Transverse colon (tissue), 4 donors: ENCODE measurements at regions of chr2 and their contacts with region 1.

Region 1: GRCh38 chr2:102050854-102051391 is 59.2 kb downstream of the IL1R2 start:
- DNase-seq: peak; percentile 71
- H3K4me3 ChIP-seq: no peak overlapping the region
- H3K27ac ChIP-seq: peak overlapping the region; percentile 81 to 87 (median 84)
- H3K4me1 ChIP-seq: peaks cover 16 to 55% (median 39%) of the 10 kb centered on the region in 4 donors
- H3K27me3 ChIP-seq: no peaks in the 10 kb centered on the region
- CTCF ChIP-seq: no peak
- EP300 ChIP-seq: peak; percentile 77
- POLR2A ChIP-seq: no peak

Region 2: DNA sequence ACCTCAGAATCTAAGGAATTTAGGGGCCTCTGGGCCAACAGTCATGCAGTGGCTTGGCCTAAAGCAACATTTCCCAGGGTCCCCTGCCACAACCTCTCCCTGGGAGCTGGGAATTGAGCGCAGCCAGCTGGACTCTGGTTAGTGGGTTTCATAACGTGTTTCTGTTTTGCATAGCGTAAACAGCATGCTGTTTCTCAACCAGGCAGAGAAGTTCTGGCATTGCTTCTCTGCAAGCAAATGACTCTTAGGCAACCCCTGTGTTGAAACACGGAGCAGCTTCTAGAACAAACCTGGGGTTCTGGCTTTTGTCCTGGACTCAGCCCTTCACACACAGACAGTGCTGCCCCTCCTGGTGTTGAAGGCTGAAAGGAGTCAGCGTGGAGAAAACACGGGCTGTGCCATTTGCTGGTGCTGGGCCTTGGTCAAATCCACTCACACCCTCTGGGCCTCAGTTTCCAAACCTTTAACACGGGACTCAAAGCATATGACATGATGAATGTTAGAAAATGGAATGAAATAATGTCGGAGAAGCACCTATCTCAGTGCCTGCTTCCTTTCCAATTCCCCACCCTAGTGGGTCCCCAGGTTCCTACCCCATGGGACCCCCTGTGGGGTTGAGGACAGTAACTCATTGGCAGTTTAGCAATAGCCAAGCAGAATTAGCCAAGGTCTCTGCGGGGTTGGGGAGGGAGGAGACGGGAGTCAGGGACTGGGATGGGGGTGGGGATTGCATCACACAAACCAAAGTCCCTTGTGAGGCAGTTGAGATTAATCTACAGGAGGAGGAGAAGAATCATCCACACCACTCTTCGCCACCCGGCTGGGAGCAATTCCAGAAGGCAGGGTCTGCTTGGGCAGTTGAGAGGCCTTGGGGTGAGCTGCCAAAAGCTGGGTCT is 89.4 kb before region 1 on chr2:
- in situ Hi-C with region 1: no loop called
- intact Hi-C with region 1: loop called (anchors 10 kb)
- DNase-seq: peak; percentile 68
- H3K4me3 ChIP-seq: no peak overlapping the region
- H3K27ac ChIP-seq: peak overlapping the region; percentile 67 to 89 (median 84)
- H3K4me1 ChIP-seq: peaks cover 8 to 23% (median 11%) of the 10 kb centered on the region in 4 donors
- H3K27me3 ChIP-seq: no peaks in the 10 kb centered on the region
- CTCF ChIP-seq: no peak
- EP300 ChIP-seq: peak; percentile 73
- POLR2A ChIP-seq: no peak

Region 3: GRCh38 chr2:102063941-102064678 is 13.2 kb after region 1 on chr2:
- in situ Hi-C with region 1: no loop called
- intact Hi-C with region 1: loop called (anchors 1 kb)
- DNase-seq: peak; percentile 81
- H3K4me3 ChIP-seq: no peak overlapping the region
- H3K27ac ChIP-seq: peak overlapping the region; percentile 88 to 93 (median 91)
- H3K4me1 ChIP-seq: peaks cover 21 to 64% (median 38%) of the 10 kb centered on the region in 4 donors
- H3K27me3 ChIP-seq: no peaks in the 10 kb centered on the region
- CTCF ChIP-seq: no peak
- EP300 ChIP-seq: peak; percentile 98
- POLR2A ChIP-seq: no peak

Region 4: DNA sequence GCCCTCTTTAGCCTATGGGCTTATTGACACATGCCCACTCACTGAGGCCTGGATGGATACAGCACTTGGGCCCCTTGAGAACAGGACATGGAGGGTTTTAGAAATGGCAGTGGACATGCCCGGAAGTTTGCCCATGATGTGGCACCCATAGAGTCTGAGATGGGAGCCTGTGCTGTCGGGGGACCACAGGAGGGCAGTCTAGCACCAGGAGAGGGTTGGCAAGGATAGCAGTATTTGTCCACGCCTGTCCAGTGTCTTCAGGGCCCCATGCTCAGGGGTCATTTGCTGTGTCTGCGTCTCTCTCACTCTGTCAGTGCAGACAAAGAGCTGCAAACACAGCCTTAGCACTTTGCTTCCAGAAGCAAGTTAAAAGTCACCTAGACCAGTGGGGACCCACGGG is 184.6 kb after region 1 on chr2:
- in situ Hi-C with region 1: no loop called
- intact Hi-C with region 1: loop called (anchors 10 kb)
- DNase-seq: no peak
- H3K4me3 ChIP-seq: no peak overlapping the region
- H3K27ac ChIP-seq: no peak overlapping the region
- H3K4me1 ChIP-seq: peaks cover 0 to 2% (median 2%) of the 10 kb centered on the region in 4 donors
- H3K27me3 ChIP-seq: no peaks in the 10 kb centered on the region
- CTCF ChIP-seq: peak in 1 of 5 experiments; percentile 4
- EP300 ChIP-seq: no peak
- POLR2A ChIP-seq: no peak